Left ventricle myocardium superior (tissue), 1 donor: ENCODE measurements at regions of chr16 and their contacts with region 1.

Region 1: GRCh38 chr16:89330177-89330856 is 112.8 kb downstream of the ZNF778 start:
- DNase-seq: peak; percentile 53
- ATAC-seq: no peak

Region 2: DNA sequence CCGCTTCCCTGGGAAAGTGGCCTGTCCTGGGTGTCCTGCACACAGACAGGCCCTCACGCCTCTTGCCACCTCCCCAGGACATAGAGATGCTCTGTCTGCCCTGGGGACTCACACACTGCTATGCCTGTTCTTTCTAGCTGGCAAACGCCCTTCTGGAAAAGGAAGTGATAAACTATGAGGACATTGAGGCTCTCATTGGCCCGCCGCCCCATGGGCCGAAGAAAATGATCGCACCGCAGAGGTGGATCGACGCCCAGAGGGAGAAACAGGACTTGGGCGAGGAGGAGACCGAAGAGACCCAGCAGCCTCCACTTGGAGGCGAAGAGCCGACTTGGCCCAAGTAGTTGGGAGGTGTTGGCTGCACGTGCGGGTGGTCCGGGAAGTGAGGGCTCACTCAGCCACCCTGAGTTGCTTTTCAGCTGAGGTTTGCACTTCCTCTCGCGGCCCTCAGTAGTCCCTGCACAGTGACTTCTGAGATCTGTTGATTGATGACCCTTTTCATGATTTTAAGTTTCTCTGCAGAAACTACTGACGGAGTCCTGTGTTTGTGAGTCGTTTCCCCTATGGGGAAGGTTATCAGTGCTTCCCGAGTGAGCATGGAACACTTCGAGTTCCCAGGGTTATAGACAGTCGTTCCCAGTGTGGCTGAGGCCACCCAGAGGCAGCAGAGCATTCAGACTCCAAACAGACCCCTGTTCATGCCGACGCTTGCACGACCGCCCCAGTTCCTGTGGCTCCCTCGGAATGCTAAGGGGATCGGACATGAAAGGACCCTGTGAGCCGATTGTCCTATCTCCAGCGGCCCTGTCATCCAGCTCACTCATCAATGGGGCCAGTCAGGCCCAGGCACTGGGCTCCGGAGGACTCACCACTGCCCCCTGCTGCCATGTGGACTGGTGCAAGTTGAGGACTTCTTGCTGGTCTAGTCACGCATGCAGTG is 226.7 kb after region 1 on chr16:
- intact Hi-C with region 1: loop called (anchors 5 kb)
- DNase-seq: peak; percentile 90
- ATAC-seq: peak; percentile 25